H1 (cell line): ENCODE measurements at regions of chr16 and their contacts with region 1.

Region 1: DNA sequence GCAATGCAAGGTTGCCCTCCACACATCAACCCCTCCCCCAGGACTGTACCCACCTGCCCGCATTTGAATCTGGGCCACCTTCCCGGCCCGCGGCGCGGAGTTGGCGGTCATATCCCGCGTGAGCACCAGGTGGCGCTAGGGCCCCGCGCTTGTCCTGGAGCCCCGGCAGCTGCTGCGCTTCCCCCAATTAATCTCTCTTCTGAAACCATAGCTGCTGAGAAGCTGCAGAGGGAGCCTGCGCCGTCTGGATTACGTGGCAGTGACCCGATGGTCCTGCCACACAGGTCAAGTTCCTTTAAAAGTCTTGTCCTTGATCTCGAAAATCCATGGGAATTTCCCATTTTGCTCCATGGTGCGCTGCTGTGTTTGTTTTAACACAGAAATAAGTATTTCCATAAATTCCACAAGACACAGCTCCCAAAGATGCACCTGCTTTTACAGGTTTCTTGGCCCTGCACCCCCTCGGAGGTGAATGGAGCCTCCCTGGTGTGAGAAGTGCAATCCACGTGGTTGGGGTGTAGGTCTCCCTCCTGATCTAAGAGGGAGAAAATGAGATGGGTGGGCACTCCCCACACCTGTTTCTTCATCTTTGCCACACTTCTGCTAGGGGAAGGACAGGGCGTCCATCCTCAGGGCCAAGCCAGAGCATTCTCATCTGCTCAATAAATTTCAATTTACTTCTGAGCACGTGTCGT is 22.1 kb downstream of the COX4I1 start:
- DNase-seq: peak; percentile 63 to 99
- H3K4me3 ChIP-seq: no peak overlapping the region
- H3K27ac ChIP-seq: no peak overlapping the region
- H3K4me1 ChIP-seq: no peaks in the 10 kb centered on the region; a peak in 1 of 7 replicates
- H3K27me3 ChIP-seq: peaks cover 0 to 11% (median 3%) of the 10 kb centered on the region in 4 experiments; a peak in 2 of 7 replicates
- CTCF ChIP-seq: peak; percentile 86 to 99 (median 92)
- EP300 ChIP-seq: peak in 1 of 2 experiments; percentile 53; a peak in 1 of 3 replicates
- POLR2A ChIP-seq: no peak
- RAD21 ChIP-seq: peak; percentile 99 to 100

Region 2: GRCh38 chr16:85305996-85306792 is 515.4 kb before region 1 on chr16:
- CTCF ChIA-PET with region 1: no interaction called
- POLR2A ChIA-PET with region 1: no interaction called
- DNase-seq: no peak
- H3K4me3 ChIP-seq: no peak overlapping the region
- H3K27ac ChIP-seq: no peak overlapping the region
- H3K4me1 ChIP-seq: peaks cover 3 to 27% (median 23%) of the 10 kb centered on the region in 4 experiments
- H3K27me3 ChIP-seq: 0 out of 7 replicates have a peak, but pooled peaks cover 0 to 4% (median 0%) of the 10 kb centered on the region in 4 experiments
- CTCF ChIP-seq: no peak
- EP300 ChIP-seq: no peak
- POLR2A ChIP-seq: no peak
- RAD21 ChIP-seq: no peak

Region 3: GRCh38 chr16:85767569-85767968 is 54.0 kb before region 1 on chr16:
- CTCF ChIA-PET with region 1: no interaction called
- POLR2A ChIA-PET with region 1: no interaction called
- DNase-seq: no peak
- H3K4me3 ChIP-seq: no peak overlapping the region
- H3K27ac ChIP-seq: peak overlapping the region; percentile 42; the same call in 1 of the 2 replicates
- H3K4me1 ChIP-seq: peaks cover 0 to 20% (median 10%) of the 10 kb centered on the region in 4 experiments; a peak in 5 of 7 replicates
- H3K27me3 ChIP-seq: no peaks in the 10 kb centered on the region; a peak in 1 of 7 replicates
- CTCF ChIP-seq: no peak
- EP300 ChIP-seq: no peak
- POLR2A ChIP-seq: no peak
- RAD21 ChIP-seq: no peak

Region 4: DNA sequence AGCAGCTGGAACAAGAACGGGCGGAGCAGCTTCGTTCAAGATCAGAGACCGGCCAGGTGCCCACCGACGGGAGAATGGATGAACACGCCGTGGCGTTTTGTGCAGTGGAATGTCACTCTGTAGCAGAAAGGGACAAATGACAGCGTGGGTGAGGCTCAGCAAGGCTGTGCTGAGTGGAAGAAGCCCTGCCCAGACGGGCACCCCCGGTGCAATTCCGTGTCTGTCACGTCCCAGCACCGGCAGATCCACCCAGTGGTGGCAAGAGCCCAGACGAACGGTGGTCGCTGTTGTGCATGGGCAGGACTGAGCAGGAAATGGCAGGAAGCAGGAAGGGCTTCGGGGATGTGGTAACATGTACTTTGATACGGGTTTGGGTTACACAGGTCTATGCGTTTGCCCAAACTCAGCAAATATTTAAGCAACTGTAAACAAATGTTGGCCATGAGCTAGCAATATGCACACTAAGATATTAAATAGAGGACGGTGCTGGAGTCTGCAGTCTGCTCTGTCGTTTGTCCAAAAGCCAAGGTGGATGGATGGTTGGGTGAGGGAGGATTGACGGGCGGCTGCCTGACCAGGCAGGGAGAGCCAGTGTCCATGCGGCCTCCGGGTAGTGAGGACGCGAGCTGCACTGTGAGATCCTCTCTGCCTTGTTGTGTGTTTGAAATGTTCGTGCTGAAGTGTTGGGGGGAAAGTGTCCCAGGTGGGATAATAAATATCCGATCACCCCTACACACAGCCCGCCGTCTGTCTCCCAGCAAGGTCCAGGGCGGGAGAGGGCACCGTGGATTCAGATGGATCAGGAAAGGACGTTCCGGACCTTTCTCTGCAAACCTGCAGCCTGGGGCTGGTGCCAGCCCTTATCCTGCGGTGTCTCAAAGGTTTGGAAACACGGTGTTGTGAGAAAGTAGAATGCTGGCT is 26.4 kb after region 1 on chr16:
- CTCF ChIA-PET with region 1: interaction called, 26 read pairs
- POLR2A ChIA-PET with region 1: no interaction called
- DNase-seq: no peak
- H3K4me3 ChIP-seq: no peak overlapping the region
- H3K27ac ChIP-seq: no peak overlapping the region
- H3K4me1 ChIP-seq: no peaks in the 10 kb centered on the region
- H3K27me3 ChIP-seq: no peaks in the 10 kb centered on the region; a peak in 1 of 7 replicates
- CTCF ChIP-seq: no peak
- EP300 ChIP-seq: no peak
- POLR2A ChIP-seq: no peak
- RAD21 ChIP-seq: no peak

Region 5: GRCh38 chr16:85898521-85899442 is 77.2 kb after region 1 on chr16 and contains the start of gene IRF8:
- CTCF ChIA-PET with region 1: interaction called, 77 read pairs
- POLR2A ChIA-PET with region 1: no interaction called
- DNase-seq: peak in 1 of 2 experiments; percentile 84
- H3K4me3 ChIP-seq: peak within 1 kb of the TSS; percentile 41 to 68 (median 56)
- H3K27ac ChIP-seq: no peak within 1 kb of the TSS
- H3K4me1 ChIP-seq: no peaks in the 10 kb centered on the region
- H3K27me3 ChIP-seq: peaks cover 11 to 46% (median 31%) of the 10 kb centered on the region in 4 experiments
- CTCF ChIP-seq: no peak
- EP300 ChIP-seq: no peak
- POLR2A ChIP-seq: no peak
- RAD21 ChIP-seq: no peak
- total RNA-seq, gene IRF8: 0.96 and 2.0 TPM in 2 replicates

Region 6: GRCh38 chr16:85965125-85965524 is 143.5 kb after region 1 on chr16:
- CTCF ChIA-PET with region 1: interaction called, 13 read pairs
- POLR2A ChIA-PET with region 1: no interaction called
- DNase-seq: no peak
- H3K4me3 ChIP-seq: no peak overlapping the region
- H3K27ac ChIP-seq: no peak overlapping the region
- H3K4me1 ChIP-seq: no peaks in the 10 kb centered on the region
- H3K27me3 ChIP-seq: no peaks in the 10 kb centered on the region
- CTCF ChIP-seq: no peak
- EP300 ChIP-seq: no peak
- POLR2A ChIP-seq: no peak
- RAD21 ChIP-seq: no peak

Region 7: DNA sequence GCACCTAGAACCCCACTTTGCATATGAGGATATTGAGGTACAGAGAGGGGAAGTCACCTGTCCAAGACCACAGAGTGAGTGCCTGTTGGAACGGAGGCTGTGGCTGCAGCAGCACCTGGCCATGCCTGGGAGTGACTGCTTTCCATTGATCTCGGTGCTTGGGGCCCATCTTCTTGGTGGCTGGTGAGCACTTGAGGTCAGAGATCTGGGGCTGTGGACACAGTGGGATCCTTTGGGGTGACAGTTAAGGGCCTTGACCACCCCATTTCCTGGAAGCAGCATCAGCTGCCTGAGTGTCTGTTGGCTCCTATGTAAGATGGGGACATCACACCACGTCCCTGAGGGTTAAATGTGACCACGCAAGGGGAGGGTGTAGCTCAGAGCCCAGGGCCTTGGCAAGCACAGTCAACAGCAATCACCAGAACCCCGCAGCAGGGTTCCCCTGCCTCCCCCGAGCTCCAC is 189.1 kb after region 1 on chr16:
- CTCF ChIA-PET with region 1: interaction called, 46 read pairs
- POLR2A ChIA-PET with region 1: no interaction called
- DNase-seq: no peak
- H3K4me3 ChIP-seq: no peak overlapping the region
- H3K27ac ChIP-seq: no peak overlapping the region
- H3K4me1 ChIP-seq: no peaks in the 10 kb centered on the region
- H3K27me3 ChIP-seq: no peaks in the 10 kb centered on the region; a peak in 2 of 7 replicates
- CTCF ChIP-seq: no peak
- EP300 ChIP-seq: no peak
- POLR2A ChIP-seq: no peak
- RAD21 ChIP-seq: no peak

Region 8: DNA sequence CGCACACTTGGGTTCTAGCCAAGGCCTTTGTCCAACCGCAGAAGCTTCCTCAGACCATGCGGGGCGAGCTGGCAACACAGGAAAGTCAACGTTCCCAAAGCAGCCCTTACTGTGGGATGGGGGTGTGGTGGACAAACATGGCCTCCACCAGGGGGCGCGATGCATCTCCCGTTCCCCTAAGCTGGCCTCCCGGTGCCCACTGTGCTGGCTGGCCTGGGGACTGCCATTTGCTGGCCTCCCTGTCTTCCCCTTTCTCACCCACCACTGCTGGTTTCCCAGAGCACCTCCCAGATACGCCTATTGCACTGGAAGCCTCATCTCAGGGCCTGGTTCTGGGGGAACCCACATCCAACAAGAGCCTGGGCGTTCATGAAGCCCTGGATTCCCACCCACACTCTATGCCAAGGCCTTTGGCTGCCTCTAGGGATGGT is 222.7 kb after region 1 on chr16:
- CTCF ChIA-PET with region 1: interaction called, 27 read pairs
- POLR2A ChIA-PET with region 1: no interaction called
- DNase-seq: peak; percentile 46 to 93
- H3K4me3 ChIP-seq: no peak overlapping the region
- H3K27ac ChIP-seq: no peak overlapping the region
- H3K4me1 ChIP-seq: peaks cover 0 to 1% (median 0%) of the 10 kb centered on the region in 4 experiments; a peak in 1 of 7 replicates
- H3K27me3 ChIP-seq: no peaks in the 10 kb centered on the region; a peak in 1 of 7 replicates
- CTCF ChIP-seq: peak; percentile 87 to 97 (median 94)
- EP300 ChIP-seq: no peak
- POLR2A ChIP-seq: no peak
- RAD21 ChIP-seq: peak; percentile 71 to 78

Region 9: DNA sequence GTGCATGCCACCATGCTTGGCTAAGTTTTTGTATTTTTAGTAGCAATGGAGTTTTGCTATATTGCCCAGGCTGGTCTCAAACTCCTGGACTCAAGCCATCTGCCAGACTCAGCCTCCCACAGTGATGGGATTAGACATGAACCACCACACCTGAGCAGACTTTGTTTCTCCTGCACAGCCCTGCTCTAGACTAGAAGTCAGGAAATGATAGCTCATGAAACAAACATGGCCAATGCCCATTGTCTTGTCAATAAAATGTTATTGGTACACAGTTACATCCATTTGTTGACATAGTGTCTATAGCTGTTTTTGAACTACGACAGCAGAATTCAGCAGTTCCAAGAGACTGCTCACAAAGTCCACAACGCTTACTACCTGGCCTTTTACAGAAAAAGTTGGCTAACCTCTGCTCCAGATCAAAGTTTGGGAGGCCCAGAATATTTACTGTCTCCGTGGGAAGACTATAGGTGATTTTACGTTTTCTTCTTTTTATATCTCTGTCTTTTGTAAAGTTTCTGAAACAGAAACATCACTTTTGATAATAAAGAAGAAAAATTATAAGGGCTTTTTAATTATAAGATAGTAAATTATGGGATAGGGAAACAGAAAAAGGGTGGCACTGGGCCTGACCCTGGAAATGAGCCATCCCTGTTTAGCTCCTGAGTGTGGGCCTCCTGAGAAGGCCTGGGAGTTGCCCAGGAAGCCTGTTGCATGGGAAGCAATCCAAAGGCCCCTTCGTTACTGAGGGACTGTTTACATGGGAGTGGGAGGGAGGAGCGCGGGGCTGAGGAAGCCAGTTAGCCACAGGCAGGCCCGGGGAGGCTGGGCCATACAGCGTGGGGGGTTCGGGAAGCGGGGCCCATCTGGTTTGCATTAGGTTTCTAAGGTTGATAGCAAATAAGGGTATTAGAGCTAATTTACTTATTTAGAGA is 278.9 kb after region 1 on chr16:
- CTCF ChIA-PET with region 1: no interaction called
- POLR2A ChIA-PET with region 1: no interaction called
- DNase-seq: no peak
- H3K4me3 ChIP-seq: no peak overlapping the region
- H3K27ac ChIP-seq: no peak overlapping the region
- H3K4me1 ChIP-seq: no peaks in the 10 kb centered on the region
- H3K27me3 ChIP-seq: no peaks in the 10 kb centered on the region
- CTCF ChIP-seq: no peak
- EP300 ChIP-seq: no peak
- POLR2A ChIP-seq: no peak
- RAD21 ChIP-seq: no peak